CD8-positive, alpha-beta T cell (primary cell): ENCODE measurements at regions of chr11 and their contacts with region 1.

Region 1: DNA sequence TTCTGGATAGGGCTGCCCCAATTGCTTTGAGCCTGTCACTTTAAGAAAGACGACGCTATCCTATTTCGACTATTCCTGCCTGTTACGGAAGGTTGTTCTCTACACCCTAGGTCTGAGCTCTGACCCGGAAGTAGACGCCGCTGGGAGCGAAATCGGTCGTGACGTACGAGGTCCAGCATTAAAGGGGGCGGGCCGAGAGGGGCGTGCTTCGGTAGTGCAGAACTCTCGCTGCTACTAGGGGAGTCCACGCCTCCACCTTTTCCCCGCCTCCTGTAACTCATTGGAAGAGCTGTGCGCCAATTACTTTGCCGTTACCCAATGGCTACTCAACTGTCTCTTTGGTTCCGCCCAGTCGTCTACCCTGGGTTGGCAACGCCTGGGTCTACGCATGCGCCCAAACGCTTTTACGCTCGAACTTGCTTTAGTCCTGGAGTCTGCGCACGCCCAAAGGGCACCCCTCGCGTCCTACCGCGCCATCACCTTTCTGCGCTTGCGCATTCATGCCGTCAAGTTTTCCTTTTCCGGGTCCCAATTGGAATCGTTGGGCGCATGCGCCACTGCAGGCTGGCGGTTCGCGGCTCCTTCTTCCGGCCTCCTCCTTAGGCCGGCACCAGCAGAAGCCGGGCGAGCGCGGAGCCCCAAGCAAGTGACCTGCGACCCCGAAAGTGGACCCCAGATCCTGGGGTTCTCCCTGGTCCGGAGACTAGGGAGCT is at the start of gene PCNX3:
- DNase-seq: peak; percentile 99 to 100 (median 100)
- ATAC-seq: peak; percentile 88
- H3K4me3 ChIP-seq: peak within 1 kb of the TSS; percentile 78 to 89
- H3K4me3 Mint-ChIP-seq: peak within 1 kb of the TSS; percentile 96
- H3K27ac ChIP-seq: peak within 1 kb of the TSS; percentile 92 to 97
- H3K27ac Mint-ChIP-seq: peak within 1 kb of the TSS; percentile 96
- H3K4me1 ChIP-seq: peaks cover 46% of the 10 kb centered on the region
- H3K4me1 Mint-ChIP-seq: peaks cover 45% of the 10 kb centered on the region
- H3K27me3 ChIP-seq: no peaks in the 10 kb centered on the region
- H3K27me3 Mint-ChIP-seq: no peaks in the 10 kb centered on the region
- CTCF ChIP-seq: no peak
- total RNA-seq, gene PCNX3: 52.7 to 56.4 TPM

Region 2: GRCh38 chr11:64924102-64924851 is 691.1 kb before region 1 on chr11 and contains the start of gene PPP2R5B:
- CTCF ChIA-PET with region 1: no interaction called
- POLR2A ChIA-PET with region 1: no interaction called
- intact Hi-C with region 1: loop called (anchors 1 to 10 kb)
- DNase-seq: peak; percentile 78 to 94 (median 90)
- ATAC-seq: peak; percentile 94
- H3K4me3 ChIP-seq: peak within 1 kb of the TSS; percentile 69 to 76
- H3K4me3 Mint-ChIP-seq: peak within 1 kb of the TSS; percentile 95
- H3K27ac ChIP-seq: peak within 1 kb of the TSS; percentile 58 to 92
- H3K27ac Mint-ChIP-seq: peak within 1 kb of the TSS; percentile 96
- H3K4me1 ChIP-seq: peaks cover 19% of the 10 kb centered on the region
- H3K4me1 Mint-ChIP-seq: peaks cover 15% of the 10 kb centered on the region
- H3K27me3 ChIP-seq: no peaks in the 10 kb centered on the region
- H3K27me3 Mint-ChIP-seq: no peaks in the 10 kb centered on the region
- CTCF ChIP-seq: no peak
- total RNA-seq, gene PPP2R5B: 14.8 to 18.0 TPM

Region 3: DNA sequence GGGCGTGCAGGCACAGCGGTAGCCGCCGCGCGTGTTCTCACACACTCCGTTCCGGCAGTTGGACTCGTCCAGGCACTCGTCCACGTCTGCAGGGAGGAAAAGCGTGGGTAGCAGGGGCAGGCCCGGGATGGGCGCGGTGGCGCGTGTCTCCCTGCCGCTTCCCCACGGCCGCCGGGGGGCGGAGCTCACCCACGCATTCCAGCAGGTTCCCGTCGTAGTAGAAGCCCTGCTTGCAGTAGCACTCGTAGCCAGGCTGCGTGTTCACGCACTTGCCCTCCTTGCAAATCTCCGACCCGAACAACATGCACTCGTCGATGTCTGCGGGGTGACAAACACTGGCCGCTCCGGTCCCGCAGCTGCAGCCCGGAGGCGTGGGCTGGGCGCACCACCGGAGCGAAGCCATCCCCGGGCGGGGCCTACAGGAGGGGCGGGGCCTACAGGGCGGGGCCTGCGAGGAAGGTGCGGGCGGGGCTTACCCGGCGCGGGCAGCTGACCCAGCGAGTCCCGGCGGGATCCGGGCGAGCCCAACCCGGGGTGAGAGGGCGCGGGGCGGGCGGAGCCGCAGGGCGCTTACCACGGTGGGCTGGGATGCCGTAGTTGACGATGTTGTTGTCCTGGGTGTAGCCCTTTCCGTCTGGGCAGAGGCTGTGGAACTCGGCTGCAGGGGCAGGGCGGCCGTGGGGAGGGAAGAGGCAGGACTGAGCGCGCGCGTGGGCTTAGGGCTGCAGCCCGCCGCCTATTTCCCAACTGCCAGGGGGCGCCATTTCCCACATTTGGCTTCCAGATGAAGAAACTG is 74.9 kb before region 1 on chr11:
- CTCF ChIA-PET with region 1: interaction called, 12 read pairs
- POLR2A ChIA-PET with region 1: no interaction called
- intact Hi-C with region 1: loop called (anchors 1 kb)
- DNase-seq: peak; percentile 78 to 93 (median 88)
- ATAC-seq: peak; percentile 85
- H3K4me3 ChIP-seq: peak overlapping the region; percentile 77 to 80
- H3K4me3 Mint-ChIP-seq: peak overlapping the region; percentile 86
- H3K27ac ChIP-seq: peak overlapping the region; percentile 53 to 60
- H3K27ac Mint-ChIP-seq: peak overlapping the region; percentile 71
- H3K4me1 ChIP-seq: peaks cover 15% of the 10 kb centered on the region
- H3K4me1 Mint-ChIP-seq: peaks cover 19% of the 10 kb centered on the region
- H3K27me3 ChIP-seq: no peaks in the 10 kb centered on the region
- H3K27me3 Mint-ChIP-seq: no peaks in the 10 kb centered on the region
- CTCF ChIP-seq: peak; percentile 62

Region 4: GRCh38 chr11:65625628-65626342 is 10.4 kb after region 1 on chr11:
- CTCF ChIA-PET with region 1: interaction called, 14 read pairs
- POLR2A ChIA-PET with region 1: interaction called, 4 read pairs
- intact Hi-C with region 1: no loop called
- DNase-seq: peak in 8 of 9 experiments; percentile 24 to 83 (median 63)
- ATAC-seq: peak; percentile 88
- H3K4me3 ChIP-seq: no peak overlapping the region
- H3K4me3 Mint-ChIP-seq: no peak overlapping the region
- H3K27ac ChIP-seq: no peak overlapping the region
- H3K27ac Mint-ChIP-seq: peak overlapping the region; percentile 55
- H3K4me1 ChIP-seq: peaks cover 5% of the 10 kb centered on the region
- H3K4me1 Mint-ChIP-seq: peaks cover 9% of the 10 kb centered on the region
- H3K27me3 ChIP-seq: no peaks in the 10 kb centered on the region
- H3K27me3 Mint-ChIP-seq: no peaks in the 10 kb centered on the region
- CTCF ChIP-seq: peak; percentile 66

Region 5: DNA sequence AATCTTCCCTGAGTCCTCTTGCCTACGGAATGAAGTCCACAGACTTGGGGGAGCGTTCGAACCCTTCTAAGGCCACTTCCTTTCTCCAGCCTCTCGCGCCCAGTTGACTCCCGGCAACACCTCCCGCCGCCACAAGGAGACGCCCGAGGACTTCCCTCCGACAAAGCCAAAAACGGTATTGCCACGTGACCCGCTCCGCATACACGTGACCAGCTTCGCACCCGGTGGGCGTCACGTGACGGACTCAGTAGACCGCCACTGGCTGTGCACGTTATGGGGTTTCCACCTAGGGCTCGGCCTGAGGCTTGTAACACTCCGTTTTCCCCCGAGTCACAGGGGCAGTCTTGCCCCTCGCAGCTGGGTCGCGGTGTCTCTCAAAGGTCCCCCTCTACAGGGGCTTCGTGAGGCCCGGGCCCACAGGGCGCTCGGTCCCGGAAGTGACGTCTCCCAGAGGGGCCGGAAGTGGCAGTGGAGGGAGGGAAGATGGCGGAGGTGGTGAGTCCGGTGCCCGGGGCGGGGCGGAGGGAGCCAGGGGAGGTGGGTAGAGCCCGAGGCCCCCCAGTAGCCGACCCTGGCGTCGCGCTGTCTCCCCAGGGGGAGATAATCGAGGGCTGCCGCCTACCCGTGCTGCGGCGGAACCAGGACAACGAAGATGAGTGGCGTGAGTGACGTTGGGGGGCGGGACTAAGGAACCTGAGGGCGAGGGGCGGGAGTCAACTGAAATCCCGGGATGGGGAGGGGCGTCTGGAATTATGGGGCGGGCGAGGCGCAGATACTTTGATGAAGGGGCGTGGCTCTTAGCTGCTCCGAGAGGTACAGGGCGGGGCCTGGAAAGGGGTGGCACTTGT is 96.6 kb after region 1 on chr11 and contains the start of gene KAT5:
- CTCF ChIA-PET with region 1: interaction called, 3 read pairs
- POLR2A ChIA-PET with region 1: interaction called, 14 read pairs
- intact Hi-C with region 1: loop called in 1 of 2 experiments (anchors 1 kb)
- DNase-seq: peak; percentile 95 to 99 (median 98)
- ATAC-seq: peak; percentile 83
- H3K4me3 ChIP-seq: peak within 1 kb of the TSS; percentile 92 to 99
- H3K4me3 Mint-ChIP-seq: peak within 1 kb of the TSS; percentile 95
- H3K27ac ChIP-seq: peak within 1 kb of the TSS; percentile 99 to 100
- H3K27ac Mint-ChIP-seq: peak within 1 kb of the TSS; percentile 100
- H3K4me1 ChIP-seq: peaks cover 14% of the 10 kb centered on the region
- H3K4me1 Mint-ChIP-seq: peaks cover 21% of the 10 kb centered on the region
- H3K27me3 ChIP-seq: no peaks in the 10 kb centered on the region
- H3K27me3 Mint-ChIP-seq: no peaks in the 10 kb centered on the region
- CTCF ChIP-seq: peak; percentile 95
- total RNA-seq, gene KAT5: 149 to 151 TPM

Region 6: GRCh38 chr11:65833297-65834030 is 218.1 kb after region 1 on chr11 and contains the start of gene SNX32:
- CTCF ChIA-PET with region 1: no interaction called
- POLR2A ChIA-PET with region 1: no interaction called
- intact Hi-C with region 1: no loop called
- DNase-seq: peak; percentile 90 to 97 (median 94)
- ATAC-seq: peak; percentile 99
- H3K4me3 ChIP-seq: peak within 1 kb of the TSS; percentile 79 to 91
- H3K4me3 Mint-ChIP-seq: no peak within 1 kb of the TSS
- H3K27ac ChIP-seq: peak within 1 kb of the TSS; percentile 66 to 80
- H3K27ac Mint-ChIP-seq: peak within 1 kb of the TSS; percentile 64
- H3K4me1 ChIP-seq: peaks cover 17% of the 10 kb centered on the region
- H3K4me1 Mint-ChIP-seq: peaks cover 6% of the 10 kb centered on the region
- H3K27me3 ChIP-seq: peaks cover 0 to 3% of the 10 kb centered on the region in 2 experiments
- H3K27me3 Mint-ChIP-seq: no peaks in the 10 kb centered on the region
- CTCF ChIP-seq: no peak
- total RNA-seq, gene SNX32: 0.52 to 0.69 TPM

Region 7: GRCh38 chr11:65919146-65920033 is 304.0 kb after region 1 on chr11 and contains the start of gene DRAP1:
- CTCF ChIA-PET with region 1: no interaction called
- POLR2A ChIA-PET with region 1: no interaction called
- intact Hi-C with region 1: loop called in 1 of 2 experiments (anchors 1 kb)
- DNase-seq: peak; percentile 98 to 100 (median 99)
- ATAC-seq: peak; percentile 89
- H3K4me3 ChIP-seq: peak within 1 kb of the TSS; percentile 94
- H3K4me3 Mint-ChIP-seq: peak within 1 kb of the TSS; percentile 91
- H3K27ac ChIP-seq: peak within 1 kb of the TSS; percentile 79 to 81
- H3K27ac Mint-ChIP-seq: peak within 1 kb of the TSS; percentile 93
- H3K4me1 ChIP-seq: peaks cover 41% of the 10 kb centered on the region
- H3K4me1 Mint-ChIP-seq: peaks cover 51% of the 10 kb centered on the region
- H3K27me3 ChIP-seq: no peaks in the 10 kb centered on the region
- H3K27me3 Mint-ChIP-seq: no peaks in the 10 kb centered on the region
- CTCF ChIP-seq: no peak
- total RNA-seq, gene DRAP1: 62.2 to 63.1 TPM

Region 8: DNA sequence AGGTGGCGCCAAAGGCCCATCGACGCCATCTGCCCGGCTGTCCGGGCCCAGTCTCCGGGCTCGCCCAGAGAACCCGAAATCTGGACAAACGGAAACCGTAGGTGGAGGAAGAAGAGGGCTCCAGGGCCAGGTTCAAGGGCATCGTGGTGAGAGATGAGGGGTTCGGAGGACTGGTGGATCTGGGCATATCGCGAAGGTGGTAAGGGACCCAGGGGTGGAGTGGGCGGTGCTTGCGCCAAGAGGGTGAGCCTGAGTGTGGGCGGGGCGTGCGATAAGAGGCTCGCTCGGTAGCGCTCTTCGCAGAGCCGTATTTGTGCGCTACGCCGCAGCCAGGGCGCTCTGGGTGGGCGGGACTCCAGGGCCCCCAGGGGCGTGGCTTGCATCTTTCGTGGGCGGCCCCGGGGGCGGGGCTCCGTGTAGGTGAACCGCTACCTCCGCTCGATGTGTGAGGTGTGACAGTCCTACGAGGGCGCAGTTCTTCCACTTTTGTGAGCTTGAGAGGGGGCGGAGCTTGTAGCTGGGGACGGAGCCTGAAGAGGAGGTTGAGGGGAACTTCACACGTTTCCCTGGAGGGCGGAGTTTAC is 696.7 kb after region 1 on chr11:
- CTCF ChIA-PET with region 1: no interaction called
- POLR2A ChIA-PET with region 1: no interaction called
- intact Hi-C with region 1: loop called in 1 of 2 experiments (anchors 10 kb)
- DNase-seq: peak; percentile 94 to 100 (median 99)
- ATAC-seq: peak; percentile 71
- H3K4me3 ChIP-seq: peak overlapping the region; percentile 51 to 79
- H3K4me3 Mint-ChIP-seq: peak overlapping the region; percentile 93
- H3K27ac ChIP-seq: peak overlapping the region; percentile 76 to 98
- H3K27ac Mint-ChIP-seq: peak overlapping the region; percentile 99
- H3K4me1 ChIP-seq: peaks cover 6% of the 10 kb centered on the region
- H3K4me1 Mint-ChIP-seq: peaks cover 20% of the 10 kb centered on the region
- H3K27me3 ChIP-seq: no peaks in the 10 kb centered on the region
- H3K27me3 Mint-ChIP-seq: no peaks in the 10 kb centered on the region
- CTCF ChIP-seq: peak; percentile 98